ENCODE measurements at regions of chr11 and their contacts with region 1.

Region 1: GRCh38 chr11:124953753-124954589 is at the start of gene CCDC15:
- DNase-seq: peak; percentile 95
- H3K4me3 Mint-ChIP-seq: no peak within 1 kb of the TSS
- H3K27ac Mint-ChIP-seq: no peak within 1 kb of the TSS
- H3K4me1 Mint-ChIP-seq: no peaks in the 10 kb centered on the region
- H3K27me3 Mint-ChIP-seq: no peaks in the 10 kb centered on the region
- total RNA-seq, gene CCDC15: 3.1 and 3.4 TPM in 2 replicates

Region 2: GRCh38 chr11:123741159-123742028 is 1212.6 kb before region 1 on chr11 and contains the start of gene ZNF202:
- intact Hi-C with region 1: loop called (anchors 5 kb)
- DNase-seq: peak; percentile 87
- H3K4me3 Mint-ChIP-seq: peak within 1 kb of the TSS; percentile 96
- H3K27ac Mint-ChIP-seq: peak within 1 kb of the TSS; percentile 93
- H3K4me1 Mint-ChIP-seq: peaks cover 37% of the 10 kb centered on the region
- H3K27me3 Mint-ChIP-seq: peaks cover 7% of the 10 kb centered on the region
- total RNA-seq, gene ZNF202: 26.6 and 27.5 TPM in 2 replicates

Region 3: DNA sequence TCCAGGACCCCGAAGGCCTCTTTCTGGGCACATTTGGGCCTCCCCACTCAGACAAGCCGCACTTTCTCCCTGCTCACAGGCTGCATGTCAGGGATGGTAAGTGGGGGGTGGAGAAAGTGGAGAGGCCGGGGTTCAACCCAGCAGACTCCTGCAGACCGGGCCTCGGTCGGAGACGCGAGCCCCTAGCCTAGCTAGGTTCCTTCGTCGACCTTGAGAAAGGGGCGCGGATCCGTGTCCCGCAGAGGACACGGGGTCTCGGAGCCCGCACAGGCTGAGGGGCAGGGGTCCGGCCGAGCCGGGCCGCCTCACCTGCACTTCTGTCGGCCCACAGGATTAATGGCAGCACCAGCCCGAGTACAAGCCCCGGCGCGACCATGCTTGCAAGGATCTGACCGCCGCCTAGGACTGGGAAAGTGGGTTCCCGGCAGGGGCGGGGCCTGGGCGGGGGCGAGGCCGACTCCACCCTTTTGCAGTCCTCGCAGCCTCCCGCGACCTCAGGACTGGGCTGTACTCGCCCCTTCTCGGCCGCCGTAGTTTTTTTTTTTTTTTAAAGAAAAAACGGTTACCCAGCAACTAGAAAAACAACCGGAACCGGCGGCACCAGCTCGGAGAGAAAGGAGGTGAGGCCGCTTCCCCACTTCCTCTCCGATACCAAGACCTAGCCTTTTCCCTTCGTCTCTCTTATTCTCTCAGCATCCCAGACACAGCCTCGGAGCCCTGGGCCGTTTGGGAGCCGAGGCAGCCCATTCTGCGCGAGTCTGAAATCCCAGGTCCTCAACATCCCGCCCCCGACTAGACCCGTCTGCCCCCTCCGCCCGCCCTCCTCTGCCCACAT is 280.4 kb before region 1 on chr11 and contains the starts of genes SIAE and SPA17:
- intact Hi-C with region 1: loop called (anchors 2 kb)
- DNase-seq: peak; percentile 86
- H3K4me3 Mint-ChIP-seq: peak within 1 kb of the TSS; percentile 89
- H3K27ac Mint-ChIP-seq: peak within 1 kb of the TSS; percentile 89
- H3K4me1 Mint-ChIP-seq: peaks cover 29% of the 10 kb centered on the region
- H3K27me3 Mint-ChIP-seq: peaks cover 5% of the 10 kb centered on the region
- total RNA-seq, gene SIAE: 4.9 and 5.2 TPM in 2 replicates
- total RNA-seq, gene SPA17: 1.7 and 2.4 TPM in 2 replicates

Region 4: DNA sequence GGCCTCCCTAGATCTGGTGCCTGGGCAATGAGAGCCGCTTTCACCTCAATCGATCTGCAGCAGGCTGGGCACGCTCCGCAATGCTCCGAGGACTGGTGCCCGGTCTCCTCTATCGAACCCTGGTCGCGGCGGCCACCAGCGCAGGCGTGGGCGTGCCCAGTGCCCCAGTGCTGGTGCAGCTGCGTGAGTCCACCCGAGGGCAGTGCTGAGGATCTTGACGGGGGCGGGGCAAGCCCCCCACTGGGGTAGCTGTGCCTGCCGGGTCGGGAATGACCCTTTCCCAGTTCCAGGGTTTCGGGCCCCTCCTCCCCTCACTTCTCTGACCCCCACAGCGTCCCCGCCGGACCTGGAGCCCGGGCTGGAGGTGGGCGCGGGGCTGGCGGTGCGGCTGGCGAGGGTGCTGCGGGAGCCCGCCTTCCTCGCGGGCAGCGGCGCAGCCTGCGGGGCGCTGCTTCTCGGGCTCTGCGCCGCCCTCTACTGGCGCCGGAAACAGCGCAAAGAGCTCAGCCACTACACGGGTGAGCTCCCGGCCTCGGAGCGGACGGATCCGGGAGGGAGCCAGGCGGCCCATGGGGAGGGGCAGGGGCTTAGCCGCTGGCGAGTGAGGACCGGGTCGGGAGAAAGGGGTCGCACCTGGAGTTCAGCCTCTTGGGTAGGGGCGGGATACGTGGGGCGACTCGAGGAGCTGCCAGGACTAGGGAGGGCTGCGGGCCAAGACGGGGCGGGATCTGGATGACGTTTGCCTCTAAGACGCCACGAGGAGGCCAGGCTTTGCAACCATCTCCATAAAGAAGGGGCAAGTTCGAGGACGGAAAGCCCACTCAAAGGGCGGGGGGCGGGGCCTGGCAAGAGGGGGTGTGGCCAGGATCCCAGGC is 77.8 kb before region 1 on chr11:
- intact Hi-C with region 1: loop called (anchors 1 kb)
- DNase-seq: peak; percentile 73
- H3K4me3 Mint-ChIP-seq: peak overlapping the region; percentile 81
- H3K27ac Mint-ChIP-seq: peak overlapping the region; percentile 72
- H3K4me1 Mint-ChIP-seq: peaks cover 12% of the 10 kb centered on the region
- H3K27me3 Mint-ChIP-seq: peaks cover 46% of the 10 kb centered on the region

Region 5: DNA sequence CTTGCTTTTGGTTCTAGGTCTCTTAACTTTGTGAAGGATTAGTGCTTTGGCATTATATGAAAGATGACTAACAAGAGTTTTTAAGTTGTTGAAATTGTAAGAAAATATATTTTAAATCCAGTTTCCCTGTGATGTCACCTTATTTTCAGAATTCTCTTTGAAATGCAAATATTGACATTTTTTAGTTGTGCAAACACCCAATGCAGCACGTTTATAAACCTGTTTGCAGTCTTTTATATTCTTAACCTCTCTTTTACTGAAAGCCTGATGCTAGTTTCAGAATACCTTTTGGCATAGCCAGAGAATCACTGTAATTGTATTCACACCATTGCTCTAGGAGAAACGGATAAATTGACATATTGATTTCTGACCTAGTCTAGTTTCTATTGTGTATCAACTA is 66.4 kb after region 1 on chr11:
- intact Hi-C with region 1: no loop called
- DNase-seq: no peak
- H3K4me3 Mint-ChIP-seq: no peak overlapping the region
- H3K27ac Mint-ChIP-seq: no peak overlapping the region
- H3K4me1 Mint-ChIP-seq: no peaks in the 10 kb centered on the region
- H3K27me3 Mint-ChIP-seq: peaks cover 3% of the 10 kb centered on the region

Region 6: DNA sequence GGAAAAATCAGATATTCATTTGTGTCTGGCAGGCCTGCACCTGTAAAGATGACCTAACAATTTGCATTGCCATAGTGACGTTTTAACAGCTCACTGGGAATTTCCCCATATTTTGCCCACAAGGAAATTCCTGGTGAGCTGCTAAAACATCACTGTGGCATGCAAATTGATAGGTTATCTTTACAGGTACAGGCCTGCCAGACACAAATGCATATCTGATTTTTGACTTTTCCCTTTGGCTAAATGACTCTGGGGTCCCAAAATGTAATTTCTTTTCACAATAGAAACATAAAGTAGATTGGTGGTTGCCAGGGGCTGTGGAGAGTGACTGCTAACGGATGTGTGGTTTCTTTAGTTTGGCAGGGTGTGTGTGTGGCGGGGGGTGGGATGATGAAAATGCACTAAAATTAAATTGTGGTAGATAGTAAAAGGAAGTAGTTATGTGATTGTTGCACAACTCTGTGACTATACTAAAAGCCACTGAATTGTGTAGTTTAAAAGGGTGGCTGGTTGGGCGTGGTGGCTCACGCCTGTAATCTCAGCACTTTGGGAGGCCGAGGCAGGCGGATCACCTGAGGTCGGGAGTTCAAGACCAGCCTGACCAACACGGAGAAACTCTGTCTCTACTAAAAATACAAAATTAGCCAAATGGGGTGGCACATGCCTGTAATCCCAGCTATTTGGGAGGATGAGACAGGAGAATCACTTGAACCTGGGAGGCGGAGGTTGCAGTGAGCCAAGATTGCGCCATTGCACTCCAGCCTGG is 560.5 kb after region 1 on chr11:
- intact Hi-C with region 1: loop called (anchors 2 kb)
- DNase-seq: peak; percentile 55
- H3K4me3 Mint-ChIP-seq: peak overlapping the region; percentile 8
- H3K27ac Mint-ChIP-seq: peak overlapping the region; percentile 83
- H3K4me1 Mint-ChIP-seq: peaks cover 57% of the 10 kb centered on the region
- H3K27me3 Mint-ChIP-seq: no peaks in the 10 kb centered on the region

Region 7: DNA sequence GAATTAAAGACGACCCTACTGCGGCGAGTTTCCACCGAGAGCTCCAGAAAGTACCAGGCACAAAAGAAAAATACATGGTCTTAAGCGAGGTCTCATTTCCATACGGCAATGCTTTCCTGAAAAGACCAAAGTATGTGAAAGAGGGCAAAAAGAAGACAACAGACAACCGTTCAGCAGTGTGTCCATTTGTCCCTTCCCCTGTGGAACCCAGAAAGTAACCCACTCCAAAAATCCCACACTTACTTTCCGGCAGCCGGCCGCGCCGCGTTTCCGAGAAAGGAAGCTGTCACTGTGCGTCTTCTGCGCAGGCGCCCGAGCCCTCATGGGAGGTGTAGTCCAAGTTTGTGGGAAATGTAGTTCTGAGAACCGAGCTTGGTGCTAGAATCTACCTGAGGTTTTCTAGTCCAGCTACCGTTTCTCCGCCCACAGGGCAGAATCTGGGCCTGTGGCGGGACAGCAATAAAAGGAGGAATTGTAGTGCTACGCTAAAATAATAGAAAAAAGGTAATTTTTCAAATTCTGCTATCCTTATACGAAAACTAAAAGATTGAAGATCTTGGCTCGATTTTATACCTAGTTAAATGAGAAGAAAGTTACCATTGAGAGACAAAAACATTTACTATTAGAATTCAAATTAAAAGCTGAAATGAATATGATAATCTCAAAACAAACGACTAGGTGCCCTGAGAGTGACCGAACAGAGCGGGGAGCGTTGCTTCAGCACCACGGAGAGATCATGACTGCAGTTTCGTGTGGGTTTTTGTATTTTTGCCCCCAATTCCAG is 949.1 kb after region 1 on chr11 and contains the start of gene PUS3:
- intact Hi-C with region 1: loop called (anchors 1 kb)
- DNase-seq: peak; percentile 85
- H3K4me3 Mint-ChIP-seq: peak within 1 kb of the TSS; percentile 98
- H3K27ac Mint-ChIP-seq: peak within 1 kb of the TSS; percentile 88
- H3K4me1 Mint-ChIP-seq: peaks cover 28% of the 10 kb centered on the region
- H3K27me3 Mint-ChIP-seq: peaks cover 34% of the 10 kb centered on the region
- total RNA-seq, gene PUS3: 16.5 and 23.6 TPM in 2 replicates